Panc1 (cell line): ENCODE measurements at regions of chr19 and their contacts with region 1.

Region 1: DNA sequence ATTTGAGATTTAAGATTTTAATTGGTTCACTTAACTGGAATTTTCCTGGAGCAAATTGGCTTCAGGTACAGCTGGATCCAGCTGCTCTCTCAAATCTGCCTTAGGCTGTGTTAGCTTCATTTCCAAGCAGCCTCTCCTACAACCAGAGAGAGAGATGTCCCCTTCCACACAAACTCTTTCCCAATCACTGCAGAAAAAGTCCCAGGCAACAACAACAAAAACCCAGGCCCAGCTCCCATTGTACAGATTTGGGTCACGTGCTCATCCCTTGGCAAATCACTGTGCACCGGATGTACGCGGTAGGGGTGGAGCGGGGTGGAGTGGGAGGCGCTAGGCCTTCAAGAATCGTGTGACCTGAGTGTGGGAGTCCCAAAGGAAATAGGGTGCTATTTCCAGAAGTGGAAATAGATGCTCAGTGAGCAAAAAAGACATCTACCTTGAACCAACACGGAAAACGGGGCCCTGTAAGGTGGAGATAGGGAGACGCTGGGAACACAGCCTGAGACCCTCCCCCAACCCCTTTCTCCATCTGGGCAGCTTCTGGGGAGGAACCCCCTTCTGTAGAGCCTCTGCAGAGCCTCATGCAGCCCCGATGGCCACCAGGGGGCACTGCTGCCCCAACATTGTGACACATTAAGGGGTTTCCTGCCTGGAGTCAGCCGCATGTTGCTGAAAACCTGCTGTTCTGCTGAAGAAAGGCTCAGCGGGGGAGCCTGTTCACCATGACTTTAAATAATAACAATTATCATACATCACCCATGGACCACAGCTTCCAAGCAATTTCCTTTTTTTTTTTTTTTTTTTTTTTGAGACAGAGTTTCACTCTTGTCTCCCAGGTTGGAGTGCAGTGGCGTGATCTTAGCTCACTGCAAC is 25.4 kb downstream of the HPN start:
- DNase-seq: no peak
- ATAC-seq: peak; percentile 95
- H3K4me3 ChIP-seq: no peak overlapping the region
- H3K27ac ChIP-seq: no peak overlapping the region
- H3K4me1 ChIP-seq: no peaks in the 10 kb centered on the region
- H3K27me3 ChIP-seq: no peaks in the 10 kb centered on the region
- CTCF ChIP-seq: peak; percentile 97

Region 2: GRCh38 chr19:35031072-35031881 is 35.6 kb before region 1 on chr19:
- CTCF ChIA-PET with region 1: interaction called, 12 read pairs
- POLR2A ChIA-PET with region 1: interaction called, 14 read pairs
- in situ Hi-C with region 1: no loop called
- intact Hi-C with region 1: no loop called
- DNase-seq: no peak
- ATAC-seq: peak; percentile 20
- H3K4me3 ChIP-seq: peak overlapping the region; percentile 37 to 42
- H3K27ac ChIP-seq: no peak overlapping the region
- H3K4me1 ChIP-seq: peaks cover 9% of the 10 kb centered on the region
- H3K27me3 ChIP-seq: peaks cover 3% of the 10 kb centered on the region; the same call in 1 of the 2 replicates
- CTCF ChIP-seq: no peak

Region 3: DNA sequence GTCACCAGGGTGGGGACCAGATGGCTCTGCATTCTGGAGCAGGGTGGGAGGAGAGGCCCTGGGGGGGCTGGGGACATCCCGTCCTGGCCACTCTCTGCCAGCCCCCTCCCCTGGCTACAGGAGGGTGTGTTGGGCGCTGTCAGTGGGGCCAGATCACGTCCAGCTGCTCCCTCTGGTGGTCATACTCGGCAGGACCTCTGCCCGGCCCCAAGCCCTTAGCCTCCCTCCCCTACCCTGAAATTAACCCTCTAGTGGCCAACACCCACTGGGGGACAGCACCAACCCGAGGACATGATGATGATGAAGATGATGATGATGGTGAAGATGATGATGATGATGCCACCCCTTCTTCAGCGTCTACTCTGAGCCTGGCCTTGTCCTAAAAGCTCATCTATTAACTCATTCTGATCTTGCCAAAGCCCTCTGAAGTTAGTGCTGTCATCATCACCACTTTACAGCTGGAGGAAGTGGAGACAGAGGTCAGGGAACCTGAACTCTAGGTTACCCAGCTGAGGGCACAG is 68.5 kb after region 1 on chr19:
- CTCF ChIA-PET with region 1: interaction called, 7 read pairs
- POLR2A ChIA-PET with region 1: no interaction called
- in situ Hi-C with region 1: no loop called
- intact Hi-C with region 1: loop called (anchors 5 kb)
- DNase-seq: no peak
- ATAC-seq: peak; percentile 88
- H3K4me3 ChIP-seq: no peak overlapping the region
- H3K27ac ChIP-seq: no peak overlapping the region
- H3K4me1 ChIP-seq: peaks cover 5% of the 10 kb centered on the region; the same call in 1 of the 2 replicates
- H3K27me3 ChIP-seq: no peaks in the 10 kb centered on the region
- CTCF ChIP-seq: peak; percentile 96

Region 4: DNA sequence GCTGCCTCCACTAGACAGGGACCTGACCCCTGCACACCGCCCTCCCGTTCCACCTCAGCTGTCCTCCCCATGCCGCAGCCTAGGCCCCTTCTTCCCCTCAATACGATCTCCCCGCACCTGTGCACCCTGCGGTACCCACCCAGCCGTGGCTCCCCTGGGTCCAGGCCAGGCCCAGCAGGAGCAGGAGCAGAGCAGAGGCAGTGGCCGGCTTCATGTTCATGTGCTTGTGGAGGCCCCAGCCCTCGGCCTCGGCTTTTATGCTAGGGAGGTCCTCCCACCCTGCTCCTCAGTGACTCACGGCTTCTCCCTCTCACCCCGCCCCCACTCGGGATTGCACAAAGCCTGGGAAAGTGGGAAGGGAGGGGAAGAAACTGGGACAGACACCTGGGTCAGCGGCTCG is 434.8 kb after region 1 on chr19:
- CTCF ChIA-PET with region 1: no interaction called
- POLR2A ChIA-PET with region 1: no interaction called
- in situ Hi-C with region 1: no loop called
- intact Hi-C with region 1: no loop called
- DNase-seq: no peak
- ATAC-seq: 0 out of 2 replicates have a peak, but pooled peaks have one; percentile 4
- H3K4me3 ChIP-seq: no peak overlapping the region
- H3K27ac ChIP-seq: no peak overlapping the region
- H3K4me1 ChIP-seq: no peaks in the 10 kb centered on the region
- H3K27me3 ChIP-seq: peaks cover 4% of the 10 kb centered on the region; the same call in 1 of the 2 replicates
- CTCF ChIP-seq: no peak